CD4-positive, alpha-beta T cell (primary cell): ENCODE measurements at regions of chr14 and their contacts with region 1.

Region 1: DNA sequence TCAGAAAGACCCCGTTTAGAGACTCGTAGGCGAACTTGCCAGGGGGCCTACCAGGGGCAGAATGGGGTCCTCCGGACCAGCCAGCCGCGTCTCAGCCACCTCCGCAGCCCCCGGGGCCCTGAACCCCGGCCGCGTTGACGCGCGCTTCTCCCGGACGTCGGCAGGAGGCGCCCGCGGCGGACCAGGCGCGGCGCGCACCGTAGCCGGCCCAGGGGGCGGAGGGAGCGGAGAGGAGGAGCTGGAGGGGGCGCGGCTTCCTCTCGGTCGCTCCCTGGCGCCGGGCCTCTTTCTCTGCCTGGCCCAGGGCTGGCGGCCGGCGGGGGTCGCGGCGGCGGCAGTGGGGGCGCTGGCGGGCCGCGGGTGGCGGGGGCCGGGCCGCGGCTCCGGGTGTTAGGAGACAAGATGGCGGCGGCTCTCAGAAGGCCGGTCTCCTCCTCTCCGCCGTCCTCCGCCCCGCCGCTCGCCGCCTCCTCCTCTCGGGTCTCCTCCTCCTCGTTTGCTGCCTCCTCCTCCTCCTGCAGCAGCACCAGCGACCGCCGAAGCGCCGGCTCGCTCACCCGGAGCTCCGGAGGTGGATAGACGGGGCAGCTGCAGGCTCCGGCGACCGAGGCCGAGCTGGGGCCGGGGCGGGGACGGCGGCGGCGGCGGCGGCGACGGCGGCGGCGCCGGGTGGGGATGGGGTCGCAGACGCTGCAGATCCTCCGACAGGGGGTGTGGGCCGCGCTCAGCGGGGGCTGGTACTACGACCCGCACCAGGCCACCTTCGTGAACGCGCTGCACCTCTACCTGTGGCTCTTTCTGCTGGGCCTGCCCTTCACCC is at the start of gene PCNX1:
- DNase-seq: peak; percentile 83 to 96 (median 89)
- ATAC-seq: peak; percentile 81
- H3K4me3 ChIP-seq: peak within 1 kb of the TSS; percentile 95
- H3K4me3 Mint-ChIP-seq: peak within 1 kb of the TSS; percentile 93
- H3K27ac ChIP-seq: peak within 1 kb of the TSS; percentile 76 to 85
- H3K27ac Mint-ChIP-seq: peak within 1 kb of the TSS; percentile 92
- H3K4me1 ChIP-seq: peaks cover 38% of the 10 kb centered on the region
- H3K4me1 Mint-ChIP-seq: peaks cover 70% of the 10 kb centered on the region
- H3K27me3 ChIP-seq: no peaks in the 10 kb centered on the region
- H3K27me3 Mint-ChIP-seq: no peaks in the 10 kb centered on the region
- CTCF ChIP-seq: peak; percentile 83
- total RNA-seq, gene PCNX1: 87.1 to 87.6 TPM

Region 2: DNA sequence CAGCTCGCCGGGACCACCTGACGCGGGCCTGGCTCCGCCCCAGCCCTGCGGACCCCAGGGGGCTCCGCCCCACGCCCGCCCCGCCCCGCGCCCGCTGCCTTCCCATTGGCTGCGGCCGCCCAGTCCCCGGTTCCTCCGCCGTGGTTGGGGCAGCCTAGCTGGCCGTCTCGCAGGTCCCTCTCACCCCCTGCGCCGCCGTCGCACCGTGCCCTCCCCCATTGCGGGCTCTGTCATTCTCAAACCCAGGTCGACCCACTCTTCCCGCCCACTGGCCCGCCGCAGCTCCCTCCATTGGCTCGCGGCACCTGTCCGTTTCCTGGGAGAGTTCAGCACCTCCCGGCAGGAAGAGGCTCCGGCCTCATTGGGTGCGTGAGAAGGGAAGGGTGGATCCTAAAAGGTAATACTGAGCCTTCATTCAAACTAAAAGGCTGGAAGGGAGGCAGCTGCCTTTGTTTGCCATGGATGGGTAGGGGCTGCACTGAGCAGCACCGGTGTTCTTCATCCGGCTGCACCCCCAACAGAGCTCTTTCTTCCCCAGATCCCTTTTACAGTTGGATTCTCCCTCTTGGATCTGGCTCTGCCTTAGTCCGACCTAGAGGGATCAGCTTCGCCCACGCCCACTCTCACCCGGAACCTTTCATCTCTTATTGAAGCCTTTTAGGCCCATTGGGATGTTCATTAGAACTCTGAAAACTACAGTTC is 97.7 kb before region 1 on chr14:
- CTCF ChIA-PET with region 1: interaction called, 10 read pairs
- POLR2A ChIA-PET with region 1: interaction called, 17 read pairs
- intact Hi-C with region 1: no loop called
- DNase-seq: peak; percentile 69 to 94 (median 84)
- ATAC-seq: peak; percentile 74
- H3K4me3 ChIP-seq: peak overlapping the region; percentile 74
- H3K4me3 Mint-ChIP-seq: no peak overlapping the region
- H3K27ac ChIP-seq: peak overlapping the region in 1 of 2 donors; percentile 31
- H3K27ac Mint-ChIP-seq: no peak overlapping the region
- H3K4me1 ChIP-seq: peaks cover 15% of the 10 kb centered on the region
- H3K4me1 Mint-ChIP-seq: peaks cover 10% of the 10 kb centered on the region
- H3K27me3 ChIP-seq: no peaks in the 10 kb centered on the region
- H3K27me3 Mint-ChIP-seq: no peaks in the 10 kb centered on the region
- CTCF ChIP-seq: no peak

Region 3: GRCh38 chr14:70873627-70874026 is 33.8 kb before region 1 on chr14:
- CTCF ChIA-PET with region 1: interaction called, 17 read pairs
- POLR2A ChIA-PET with region 1: interaction called, 42 read pairs
- intact Hi-C with region 1: loop called in 1 of 2 experiments (anchors 5 kb)
- DNase-seq: peak in 6 of 14 experiments; percentile 4 to 61 (median 42)
- ATAC-seq: peak; percentile 59
- H3K4me3 ChIP-seq: no peak overlapping the region
- H3K4me3 Mint-ChIP-seq: no peak overlapping the region
- H3K27ac ChIP-seq: no peak overlapping the region
- H3K27ac Mint-ChIP-seq: no peak overlapping the region
- H3K4me1 ChIP-seq: peaks cover 21% of the 10 kb centered on the region
- H3K4me1 Mint-ChIP-seq: peaks cover 12% of the 10 kb centered on the region
- H3K27me3 ChIP-seq: no peaks in the 10 kb centered on the region
- H3K27me3 Mint-ChIP-seq: no peaks in the 10 kb centered on the region
- CTCF ChIP-seq: no peak

Region 4: GRCh38 chr14:70926235-70926830 is 18.9 kb after region 1 on chr14:
- CTCF ChIA-PET with region 1: interaction called, 32 read pairs
- POLR2A ChIA-PET with region 1: interaction called, 57 read pairs
- intact Hi-C with region 1: loop called (anchors 2 kb)
- DNase-seq: peak in 1 of 14 experiments; percentile 35
- ATAC-seq: peak; percentile 58
- H3K4me3 ChIP-seq: no peak overlapping the region
- H3K4me3 Mint-ChIP-seq: no peak overlapping the region
- H3K27ac ChIP-seq: no peak overlapping the region
- H3K27ac Mint-ChIP-seq: peak overlapping the region; percentile 20
- H3K4me1 ChIP-seq: peaks cover 41% of the 10 kb centered on the region
- H3K4me1 Mint-ChIP-seq: peaks cover 91% of the 10 kb centered on the region
- H3K27me3 ChIP-seq: no peaks in the 10 kb centered on the region
- H3K27me3 Mint-ChIP-seq: no peaks in the 10 kb centered on the region
- CTCF ChIP-seq: no peak

Region 5: DNA sequence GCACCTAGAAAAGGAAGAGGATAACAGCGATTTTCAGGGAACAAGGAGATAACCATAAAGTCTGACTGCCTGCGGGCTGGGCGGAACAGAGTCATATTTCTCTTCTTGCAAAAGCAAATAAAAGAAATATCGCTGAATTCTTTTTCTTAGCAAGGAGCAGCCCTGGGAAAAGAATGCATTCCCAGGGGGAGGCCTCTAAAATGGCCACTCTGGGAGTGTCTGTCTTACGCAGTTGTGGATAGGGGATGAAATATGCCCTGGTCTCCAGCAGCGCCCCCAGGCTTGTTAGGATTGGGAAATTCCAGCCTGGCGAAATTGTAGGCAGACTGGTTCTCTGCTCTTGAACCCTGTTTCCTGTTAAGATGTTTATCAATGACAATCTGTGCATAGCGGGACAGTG is 40.3 kb after region 1 on chr14:
- CTCF ChIA-PET with region 1: interaction called, 147 read pairs
- POLR2A ChIA-PET with region 1: interaction called, 80 read pairs
- intact Hi-C with region 1: loop called in 1 of 2 experiments (anchors 2 kb)
- DNase-seq: no peak
- ATAC-seq: no peak
- H3K4me3 ChIP-seq: no peak overlapping the region
- H3K4me3 Mint-ChIP-seq: no peak overlapping the region
- H3K27ac ChIP-seq: no peak overlapping the region
- H3K27ac Mint-ChIP-seq: no peak overlapping the region
- H3K4me1 ChIP-seq: peaks cover 7% of the 10 kb centered on the region
- H3K4me1 Mint-ChIP-seq: peaks cover 46% of the 10 kb centered on the region
- H3K27me3 ChIP-seq: no peaks in the 10 kb centered on the region
- H3K27me3 Mint-ChIP-seq: no peaks in the 10 kb centered on the region
- CTCF ChIP-seq: no peak

Region 6: DNA sequence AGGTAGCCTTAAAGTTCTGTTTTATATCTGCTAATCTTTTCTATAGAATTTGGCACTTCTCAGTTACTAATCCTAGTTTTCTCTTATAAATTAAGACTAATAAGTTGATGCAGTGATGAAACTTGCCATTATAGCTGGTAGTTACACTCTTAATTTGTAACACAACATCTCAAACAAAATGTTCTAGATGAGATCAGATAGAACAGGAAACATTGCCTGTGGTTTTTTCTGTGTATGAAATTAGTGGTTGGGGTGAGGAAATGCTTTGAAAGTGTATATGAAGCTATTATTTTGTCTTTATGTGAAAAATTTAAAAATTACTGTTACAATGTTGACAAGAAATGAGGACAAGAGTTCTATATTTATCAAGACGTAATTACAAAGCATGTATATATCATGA is 91.7 kb after region 1 on chr14:
- CTCF ChIA-PET with region 1: interaction called, 10 read pairs
- POLR2A ChIA-PET with region 1: interaction called, 8 read pairs
- intact Hi-C with region 1: no loop called
- DNase-seq: peak in 3 of 14 experiments; percentile 52 to 85 (median 56)
- ATAC-seq: peak; percentile 89
- H3K4me3 ChIP-seq: peak overlapping the region; percentile 10
- H3K4me3 Mint-ChIP-seq: peak overlapping the region; percentile 56
- H3K27ac ChIP-seq: peak overlapping the region; percentile 42 to 64
- H3K27ac Mint-ChIP-seq: peak overlapping the region; percentile 79
- H3K4me1 ChIP-seq: peaks cover 25% of the 10 kb centered on the region
- H3K4me1 Mint-ChIP-seq: peaks cover 89% of the 10 kb centered on the region
- H3K27me3 ChIP-seq: no peaks in the 10 kb centered on the region
- H3K27me3 Mint-ChIP-seq: no peaks in the 10 kb centered on the region
- CTCF ChIP-seq: no peak